Activated CD4-positive, alpha-beta memory T cell treated with anti-CD3 and anti-CD28 coated beads, Interleukin-2, amount 10 ng/mL, durations not matched to agents 7 days and 5 days (primary cell): ENCODE measurements at regions of chr19 and their contacts with region 1.

Region 1: DNA sequence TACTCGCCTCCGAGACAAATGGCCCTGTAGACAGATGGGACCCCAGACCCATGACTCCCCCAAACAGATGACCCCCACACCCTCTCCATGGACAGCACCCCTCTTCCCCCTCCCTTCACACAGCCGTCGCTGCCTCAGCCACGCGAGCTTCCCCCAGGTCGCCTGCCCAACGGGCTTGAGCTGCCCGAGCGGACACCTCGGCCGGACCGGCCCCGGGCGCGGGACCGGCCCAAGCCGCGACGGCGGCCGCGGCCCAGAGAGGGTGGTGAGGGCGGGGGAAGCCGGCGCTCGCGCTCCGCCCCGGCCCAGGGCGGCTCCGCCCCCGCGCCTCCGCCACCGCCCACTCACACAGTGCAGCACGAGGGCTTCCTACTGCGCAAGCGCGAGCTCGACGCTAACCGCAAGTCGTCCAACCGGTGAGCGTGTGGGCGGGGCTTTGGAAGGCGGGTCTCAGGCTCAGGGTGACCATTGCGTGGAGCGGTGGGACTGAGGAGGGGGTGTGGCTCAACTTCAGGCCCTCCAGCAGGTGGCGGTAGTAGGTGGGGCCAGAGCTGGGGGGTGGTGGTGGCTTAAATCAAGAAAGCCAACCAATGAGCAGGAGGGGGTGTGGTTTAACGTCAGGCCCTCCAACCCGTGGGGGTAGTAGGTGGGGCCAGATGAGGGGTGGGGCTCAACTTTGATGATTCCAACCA is 6.2 kb upstream of the SHKBP1 start:
- DNase-seq: peak; percentile 98
- H3K4me3 Mint-ChIP-seq: peak overlapping the region; percentile 49
- H3K27ac Mint-ChIP-seq: peak overlapping the region; percentile 44
- H3K4me1 Mint-ChIP-seq: peaks cover 18% of the 10 kb centered on the region
- H3K27me3 Mint-ChIP-seq: peaks cover 32% of the 10 kb centered on the region

Region 2: GRCh38 chr19:40609561-40610395 is 39.3 kb after region 1 on chr19:
- CTCF ChIA-PET with region 1: interaction called, 11 read pairs
- POLR2A ChIA-PET with region 1: interaction called, 10 read pairs
- DNase-seq: peak; percentile 93
- H3K4me3 Mint-ChIP-seq: peak overlapping the region; percentile 77
- H3K27ac Mint-ChIP-seq: peak overlapping the region; percentile 96
- H3K4me1 Mint-ChIP-seq: peaks cover 77% of the 10 kb centered on the region
- H3K27me3 Mint-ChIP-seq: no peaks in the 10 kb centered on the region